Activated naive CD4-positive, alpha-beta T cell treated with anti-CD3 and anti-CD28 coated beads, Interleukin-2, amount 10 ng/mL, durations not matched to agents 7 days and 5 days (primary cell): ENCODE measurements at regions of chr9 and their contacts with region 1.

Region 1: GRCh38 chr9:128296337-128297220 is 20.5 kb downstream of the SWI5 start:
- DNase-seq: no peak
- H3K4me3 Mint-ChIP-seq: no peak overlapping the region
- H3K27ac Mint-ChIP-seq: no peak overlapping the region
- H3K4me1 Mint-ChIP-seq: no peaks in the 10 kb centered on the region
- H3K27me3 Mint-ChIP-seq: no peaks in the 10 kb centered on the region

Region 2: GRCh38 chr9:128231638-128232527 is 64.7 kb before region 1 on chr9:
- CTCF ChIA-PET with region 1: no interaction called
- DNase-seq: no peak
- H3K4me3 Mint-ChIP-seq: no peak overlapping the region
- H3K27ac Mint-ChIP-seq: no peak overlapping the region
- H3K4me1 Mint-ChIP-seq: no peaks in the 10 kb centered on the region
- H3K27me3 Mint-ChIP-seq: peaks cover 13% of the 10 kb centered on the region

Region 3: DNA sequence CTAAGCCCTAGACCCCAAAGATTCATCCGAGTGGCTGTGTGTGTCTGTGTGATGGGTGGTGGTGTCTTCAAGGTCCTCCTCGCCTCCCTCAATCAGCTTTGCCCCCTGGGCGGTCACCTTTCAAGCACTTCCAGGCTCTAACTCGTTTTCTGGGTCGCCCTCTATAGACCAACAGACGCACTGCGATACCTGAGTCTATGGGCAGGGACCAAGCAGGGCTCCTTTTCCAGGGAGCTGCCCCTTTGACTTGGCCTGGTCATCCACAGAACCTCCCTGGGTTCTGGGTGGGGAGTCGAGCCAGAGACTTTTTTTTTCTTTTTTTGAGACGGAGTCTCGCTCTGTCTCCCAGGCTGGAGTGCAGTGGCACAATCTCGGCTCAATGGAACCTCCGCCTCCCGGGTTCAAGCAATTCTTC is 44.9 kb after region 1 on chr9:
- CTCF ChIA-PET with region 1: interaction called, 26 read pairs
- DNase-seq: peak; percentile 82
- H3K4me3 Mint-ChIP-seq: peak overlapping the region; percentile 89
- H3K27ac Mint-ChIP-seq: peak overlapping the region; percentile 87
- H3K4me1 Mint-ChIP-seq: peaks cover 11% of the 10 kb centered on the region
- H3K27me3 Mint-ChIP-seq: no peaks in the 10 kb centered on the region